ENCODE measurements at regions of chr7 and their contacts with region 1.

Region 1: DNA sequence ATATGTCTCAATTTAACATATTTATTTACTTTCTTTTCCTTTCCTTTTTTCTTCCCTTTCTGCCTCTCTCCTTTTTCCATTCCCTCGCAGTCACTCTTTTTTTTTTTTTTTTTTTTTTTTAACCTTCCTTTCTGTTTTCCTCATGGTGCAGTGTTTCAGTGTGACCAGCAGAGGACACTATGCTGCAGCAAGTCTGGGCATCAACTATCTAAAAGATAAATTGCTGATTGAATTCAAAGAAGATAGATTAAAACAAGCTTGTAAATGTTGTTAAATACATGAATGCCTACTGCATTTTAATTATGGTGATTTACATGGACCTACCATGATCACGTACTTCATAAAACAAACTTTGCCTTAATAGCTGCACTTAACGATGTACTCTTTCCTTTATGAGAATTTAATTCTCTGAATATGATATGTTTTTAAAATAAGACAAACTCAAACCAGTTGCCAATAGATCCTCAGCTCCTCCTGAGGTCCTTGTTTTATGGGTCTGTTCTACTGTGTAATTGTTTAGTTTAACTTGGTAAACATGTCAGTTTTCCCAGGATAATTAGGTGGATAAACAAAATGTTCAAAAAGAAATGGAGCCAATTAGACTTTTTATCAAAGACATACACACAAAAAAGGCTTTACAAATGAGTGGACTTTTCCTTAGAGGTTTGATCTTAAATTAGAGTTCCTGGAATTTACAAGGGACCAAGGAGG is 101.0 kb upstream of the AGR3 start:
- DNase-seq: no peak
- ATAC-seq: peak; percentile 88
- H3K4me3 ChIP-seq: no peak overlapping the region
- H3K27ac ChIP-seq: no peak overlapping the region
- H3K4me1 ChIP-seq: peaks cover 32% of the 10 kb centered on the region
- H3K27me3 ChIP-seq: no peaks in the 10 kb centered on the region
- CTCF ChIP-seq: peak; percentile 96

Region 2: DNA sequence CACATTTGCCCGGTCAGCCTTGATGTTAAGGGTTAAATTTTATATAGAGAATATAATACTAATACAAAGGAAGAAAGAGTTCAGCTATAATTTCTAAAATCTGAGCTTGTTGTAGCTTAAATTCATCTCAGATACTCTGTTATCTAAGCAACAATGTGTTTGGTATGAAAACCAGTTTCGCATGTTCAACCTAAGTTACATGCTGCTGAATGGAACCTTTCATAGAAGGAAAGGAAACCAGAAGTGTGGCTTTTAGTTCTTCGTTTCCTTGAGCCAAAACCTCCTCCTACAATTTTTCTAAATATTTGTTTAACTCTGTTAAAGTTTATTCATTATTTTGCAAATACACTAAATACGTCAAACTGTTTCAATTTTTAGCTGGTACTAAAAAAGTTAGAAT is 196.5 kb before region 1 on chr7:
- intact Hi-C with region 1: no loop called
- DNase-seq: no peak
- ATAC-seq: no peak
- H3K4me3 ChIP-seq: no peak overlapping the region
- H3K27ac ChIP-seq: no peak overlapping the region
- H3K4me1 ChIP-seq: no peaks in the 10 kb centered on the region
- H3K27me3 ChIP-seq: no peaks in the 10 kb centered on the region
- CTCF ChIP-seq: no peak

Region 3: DNA sequence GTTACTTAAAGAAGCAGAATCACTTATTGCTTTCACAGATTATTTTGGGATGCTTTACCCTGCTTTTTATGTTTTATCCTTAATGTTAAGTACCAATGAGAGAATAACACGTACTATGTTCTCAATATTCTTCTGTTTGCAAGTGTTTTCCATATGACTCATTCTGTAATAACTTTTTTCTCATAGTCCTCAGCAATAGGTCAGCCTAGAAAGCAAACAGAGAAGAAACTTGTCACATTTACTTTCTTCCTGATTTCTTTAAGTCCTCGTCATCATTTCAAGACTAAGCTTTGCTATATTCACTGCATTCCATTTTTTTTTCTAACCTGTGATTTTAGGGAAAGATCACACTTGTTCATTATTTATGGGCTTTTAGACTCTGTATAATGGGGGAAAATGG is 171.2 kb before region 1 on chr7:
- intact Hi-C with region 1: no loop called
- DNase-seq: no peak
- ATAC-seq: no peak
- H3K4me3 ChIP-seq: no peak overlapping the region
- H3K27ac ChIP-seq: no peak overlapping the region
- H3K4me1 ChIP-seq: no peaks in the 10 kb centered on the region
- H3K27me3 ChIP-seq: no peaks in the 10 kb centered on the region
- CTCF ChIP-seq: no peak

Region 4: GRCh38 chr7:16933296-16934279 is 49.2 kb before region 1 on chr7:
- intact Hi-C with region 1: no loop called
- DNase-seq: no peak
- ATAC-seq: peak; percentile 89
- H3K4me3 ChIP-seq: no peak overlapping the region
- H3K27ac ChIP-seq: no peak overlapping the region
- H3K4me1 ChIP-seq: no peaks in the 10 kb centered on the region
- H3K27me3 ChIP-seq: no peaks in the 10 kb centered on the region
- CTCF ChIP-seq: no peak

Region 5: DNA sequence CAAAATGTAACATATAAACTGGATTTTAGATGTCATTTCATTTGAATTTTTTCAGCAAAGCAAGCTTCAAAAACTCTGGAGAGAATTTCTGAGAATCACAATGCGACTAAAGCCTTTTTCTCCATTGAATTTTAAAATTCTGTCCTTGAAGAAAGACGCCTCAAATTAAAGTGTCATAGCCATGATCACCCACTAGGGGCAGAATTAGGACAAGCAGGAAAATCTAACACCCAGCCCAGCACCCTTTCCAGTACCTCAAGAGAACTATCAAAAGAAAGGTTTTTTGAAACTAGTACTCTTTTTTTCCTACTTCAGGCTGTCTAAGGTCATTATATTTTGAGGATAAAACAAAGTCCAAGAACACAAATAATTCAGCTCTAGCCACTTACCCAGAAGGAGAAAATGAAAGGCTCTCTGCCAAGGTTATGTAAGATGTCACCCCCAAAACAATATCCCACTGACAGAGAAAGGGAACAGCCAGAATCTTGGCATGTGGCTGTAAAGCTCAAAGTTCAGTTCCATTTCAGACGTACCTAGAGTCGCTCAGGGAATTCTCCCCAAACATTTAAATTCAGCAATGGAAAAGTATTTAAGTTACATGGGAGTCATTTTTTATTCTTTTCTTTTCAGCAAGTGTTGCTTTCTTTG is 658.1 kb after region 1 on chr7:
- intact Hi-C with region 1: loop called (anchors 10 kb)
- DNase-seq: no peak
- ATAC-seq: peak; percentile 65
- H3K4me3 ChIP-seq: no peak overlapping the region
- H3K27ac ChIP-seq: no peak overlapping the region
- H3K4me1 ChIP-seq: no peaks in the 10 kb centered on the region
- H3K27me3 ChIP-seq: no peaks in the 10 kb centered on the region
- CTCF ChIP-seq: peak; percentile 72